ENCODE measurements at regions of chr12 and their contacts with region 1.

Region 1: DNA sequence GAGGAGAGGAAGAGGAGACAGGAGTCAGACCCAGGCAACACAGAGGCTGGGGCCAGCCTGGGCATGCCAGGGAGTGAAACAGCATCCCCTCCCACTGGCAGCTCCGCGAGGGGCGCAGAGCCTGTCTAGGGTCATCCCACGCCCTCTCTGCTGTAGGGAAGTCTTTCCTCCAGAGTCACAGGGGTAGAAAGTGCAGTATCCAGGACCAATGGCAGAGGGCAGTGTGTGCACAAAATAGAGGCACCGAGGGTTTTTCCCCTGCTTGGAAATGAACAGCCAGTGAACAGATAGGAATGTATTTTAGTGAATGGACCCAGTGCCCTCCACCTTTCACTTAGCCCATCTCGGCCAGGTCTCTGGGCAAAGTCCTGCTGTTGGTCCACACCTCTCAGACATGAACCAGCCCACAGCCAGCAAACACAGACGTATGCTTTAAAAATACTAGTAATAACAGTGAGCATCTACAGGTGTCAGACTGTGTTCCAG is 9.4 kb upstream of the KRT74 start:
- DNase-seq: peak; percentile 38 to 81 (median 60)
- ATAC-seq: peak; percentile 32
- H3K4me3 ChIP-seq: no peak overlapping the region
- H3K4me3 Mint-ChIP-seq: no peak overlapping the region
- H3K27ac ChIP-seq: no peak overlapping the region
- H3K27ac Mint-ChIP-seq: peak overlapping the region; percentile 57
- H3K4me1 ChIP-seq: peaks cover 49% of the 10 kb centered on the region
- H3K4me1 Mint-ChIP-seq: peaks cover 64% of the 10 kb centered on the region
- H3K27me3 ChIP-seq: no peaks in the 10 kb centered on the region
- H3K27me3 Mint-ChIP-seq: no peaks in the 10 kb centered on the region
- CTCF ChIP-seq: peak; percentile 70

Region 2: GRCh38 chr12:52603314-52603713 is 20.3 kb after region 1 on chr12:
- CTCF ChIA-PET with region 1: no interaction called
- POLR2A ChIA-PET with region 1: interaction called, 114 read pairs
- intact Hi-C with region 1: loop called (anchors 2 kb)
- DNase-seq: peak in 7 of 14 experiments; percentile 30 to 67 (median 54)
- ATAC-seq: peak; percentile 85
- H3K4me3 ChIP-seq: no peak overlapping the region
- H3K4me3 Mint-ChIP-seq: peak overlapping the region; percentile 32
- H3K27ac ChIP-seq: no peak overlapping the region
- H3K27ac Mint-ChIP-seq: peak overlapping the region; percentile 89
- H3K4me1 ChIP-seq: peaks cover 58% of the 10 kb centered on the region
- H3K4me1 Mint-ChIP-seq: peaks cover 82% of the 10 kb centered on the region
- H3K27me3 ChIP-seq: peaks cover 0 to 7% of the 10 kb centered on the region in 2 experiments
- H3K27me3 Mint-ChIP-seq: peaks cover 5% of the 10 kb centered on the region
- CTCF ChIP-seq: no peak

Region 3: DNA sequence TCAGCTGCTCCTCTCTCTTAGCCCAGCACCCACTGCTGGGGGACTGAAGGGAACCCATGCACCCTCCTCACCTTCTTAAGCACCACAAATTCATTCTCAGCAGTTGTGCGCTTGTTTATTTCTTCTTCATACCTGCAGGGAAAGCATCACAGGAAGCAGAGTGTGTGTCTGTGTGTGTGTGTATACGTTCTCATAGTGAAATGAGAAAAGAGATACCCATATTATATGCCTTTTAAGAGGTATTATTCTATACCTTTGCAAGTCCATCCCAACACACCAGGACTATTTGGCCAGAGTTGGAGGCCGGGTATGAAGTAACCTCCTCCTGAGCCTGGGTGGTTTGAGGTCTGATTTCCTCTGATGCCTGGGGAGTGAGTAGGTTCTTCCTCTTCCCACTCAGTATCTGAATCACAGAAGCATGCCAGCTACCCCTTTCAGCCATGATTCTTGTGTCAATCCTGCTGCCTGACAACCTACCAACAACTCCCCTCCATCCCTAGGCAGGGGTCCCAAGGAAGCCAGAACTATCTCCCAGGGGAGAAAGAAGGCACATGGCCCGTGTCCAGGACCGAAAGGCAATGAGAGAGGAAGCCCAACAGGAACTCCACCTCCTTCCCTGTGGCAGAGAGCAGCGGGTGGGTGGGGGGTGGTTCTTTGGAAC is 32.3 kb after region 1 on chr12:
- CTCF ChIA-PET with region 1: interaction called, 6 read pairs
- POLR2A ChIA-PET with region 1: interaction called, 114 read pairs
- intact Hi-C with region 1: loop called in 1 of 2 experiments (anchors 1 kb)
- DNase-seq: peak in 3 of 14 experiments; percentile 11 to 42 (median 35)
- ATAC-seq: peak; percentile 32
- H3K4me3 ChIP-seq: no peak overlapping the region
- H3K4me3 Mint-ChIP-seq: peak overlapping the region; percentile 62
- H3K27ac ChIP-seq: peak overlapping the region; percentile 47 to 61
- H3K27ac Mint-ChIP-seq: peak overlapping the region; percentile 89
- H3K4me1 ChIP-seq: peaks cover 89% of the 10 kb centered on the region
- H3K4me1 Mint-ChIP-seq: peaks cover 100% of the 10 kb centered on the region
- H3K27me3 ChIP-seq: no peaks in the 10 kb centered on the region
- H3K27me3 Mint-ChIP-seq: no peaks in the 10 kb centered on the region
- CTCF ChIP-seq: no peak

Region 4: DNA sequence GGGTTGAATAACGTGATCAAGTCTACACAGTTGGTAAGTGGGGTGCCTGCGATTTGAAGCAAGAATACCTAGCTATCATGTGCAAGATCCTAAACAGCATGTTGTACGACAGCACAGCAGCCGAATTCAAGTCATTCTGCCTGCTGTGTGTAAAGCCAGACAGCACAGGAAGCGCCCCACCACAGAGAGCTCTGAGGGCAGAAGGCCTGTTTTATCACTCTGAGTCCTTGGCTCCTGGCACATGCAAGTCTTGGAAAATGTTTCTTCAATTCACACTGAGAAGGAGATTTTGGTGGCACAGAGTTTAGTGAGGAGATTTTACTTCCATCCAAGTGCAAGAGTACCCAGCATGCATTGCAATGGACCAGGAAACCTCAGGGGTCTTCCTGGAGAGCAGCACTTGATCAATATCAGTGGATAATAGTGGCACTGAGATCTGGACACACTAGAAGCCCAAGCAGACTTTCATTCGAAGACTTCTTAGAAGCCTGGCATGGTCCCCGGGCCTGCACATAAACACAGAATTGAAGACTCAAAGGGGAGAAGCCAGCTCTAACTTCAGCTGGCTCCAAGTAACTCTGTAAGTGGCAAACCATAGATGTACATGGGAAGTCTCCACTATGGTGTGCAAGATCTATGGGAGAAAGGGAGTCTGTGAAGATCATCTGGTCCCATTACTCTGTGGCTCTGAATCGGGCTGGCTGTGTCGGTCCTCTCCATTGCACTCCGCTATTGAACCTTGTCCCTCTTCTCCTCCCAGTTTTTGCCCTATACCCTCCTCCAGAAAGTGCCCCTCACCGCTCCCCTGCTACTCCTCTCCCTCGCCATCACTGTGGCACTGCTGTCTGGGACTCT is 98.7 kb after region 1 on chr12:
- CTCF ChIA-PET with region 1: no interaction called
- POLR2A ChIA-PET with region 1: interaction called, 4 read pairs
- intact Hi-C with region 1: loop called in 1 of 2 experiments (anchors 1 kb)
- DNase-seq: peak; percentile 21 to 74 (median 48)
- ATAC-seq: peak; percentile 98
- H3K4me3 ChIP-seq: no peak overlapping the region
- H3K4me3 Mint-ChIP-seq: peak overlapping the region; percentile 52
- H3K27ac ChIP-seq: no peak overlapping the region
- H3K27ac Mint-ChIP-seq: peak overlapping the region; percentile 86
- H3K4me1 ChIP-seq: peaks cover 24% of the 10 kb centered on the region
- H3K4me1 Mint-ChIP-seq: peaks cover 64% of the 10 kb centered on the region
- H3K27me3 ChIP-seq: no peaks in the 10 kb centered on the region
- H3K27me3 Mint-ChIP-seq: no peaks in the 10 kb centered on the region
- CTCF ChIP-seq: no peak

Region 5: DNA sequence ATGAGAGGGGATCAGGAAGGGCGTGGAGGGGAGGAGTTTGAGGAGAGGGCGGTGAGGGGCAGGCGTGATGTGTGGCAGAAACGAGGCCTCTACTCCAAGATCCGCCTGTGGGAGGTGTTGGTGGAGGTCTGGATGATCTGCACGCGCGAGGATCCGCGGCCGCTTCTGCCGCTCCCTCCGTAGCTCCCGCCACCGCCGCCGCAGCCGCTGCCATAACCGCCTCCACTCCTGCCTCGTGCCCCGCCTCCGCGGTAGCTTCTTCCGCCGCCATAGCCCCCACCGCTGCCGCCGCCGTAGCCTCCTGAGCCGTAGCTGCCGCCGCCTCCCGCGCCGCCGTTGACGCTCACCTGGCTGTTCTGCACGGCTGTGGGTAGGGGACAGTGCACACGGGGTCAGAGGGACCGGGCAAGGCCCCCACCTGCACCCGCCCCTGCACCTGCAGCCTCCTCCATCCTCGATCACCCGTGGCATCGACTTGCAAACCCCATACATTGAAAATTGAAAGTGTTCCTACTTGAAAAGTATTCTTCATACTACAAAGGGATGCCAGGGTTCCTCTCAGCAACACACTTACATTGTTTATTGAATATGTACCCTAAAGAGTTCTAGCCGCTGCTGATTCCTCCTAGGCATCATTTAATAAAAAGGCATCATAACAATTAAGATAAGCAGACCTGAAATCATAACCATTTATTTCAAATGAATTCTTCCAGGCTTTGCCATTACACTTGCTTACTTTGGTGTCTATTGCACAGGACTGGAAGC is 108.2 kb after region 1 on chr12:
- CTCF ChIA-PET with region 1: interaction called, 4 read pairs
- POLR2A ChIA-PET with region 1: interaction called, 12 read pairs
- intact Hi-C with region 1: no loop called
- DNase-seq: peak; percentile 43 to 77 (median 64)
- ATAC-seq: peak; percentile 87
- H3K4me3 ChIP-seq: peak overlapping the region; percentile 55
- H3K4me3 Mint-ChIP-seq: peak overlapping the region; percentile 83
- H3K27ac ChIP-seq: no peak overlapping the region
- H3K27ac Mint-ChIP-seq: peak overlapping the region; percentile 87
- H3K4me1 ChIP-seq: peaks cover 32% of the 10 kb centered on the region
- H3K4me1 Mint-ChIP-seq: peaks cover 64% of the 10 kb centered on the region
- H3K27me3 ChIP-seq: no peaks in the 10 kb centered on the region
- H3K27me3 Mint-ChIP-seq: no peaks in the 10 kb centered on the region
- CTCF ChIP-seq: no peak

Region 6: DNA sequence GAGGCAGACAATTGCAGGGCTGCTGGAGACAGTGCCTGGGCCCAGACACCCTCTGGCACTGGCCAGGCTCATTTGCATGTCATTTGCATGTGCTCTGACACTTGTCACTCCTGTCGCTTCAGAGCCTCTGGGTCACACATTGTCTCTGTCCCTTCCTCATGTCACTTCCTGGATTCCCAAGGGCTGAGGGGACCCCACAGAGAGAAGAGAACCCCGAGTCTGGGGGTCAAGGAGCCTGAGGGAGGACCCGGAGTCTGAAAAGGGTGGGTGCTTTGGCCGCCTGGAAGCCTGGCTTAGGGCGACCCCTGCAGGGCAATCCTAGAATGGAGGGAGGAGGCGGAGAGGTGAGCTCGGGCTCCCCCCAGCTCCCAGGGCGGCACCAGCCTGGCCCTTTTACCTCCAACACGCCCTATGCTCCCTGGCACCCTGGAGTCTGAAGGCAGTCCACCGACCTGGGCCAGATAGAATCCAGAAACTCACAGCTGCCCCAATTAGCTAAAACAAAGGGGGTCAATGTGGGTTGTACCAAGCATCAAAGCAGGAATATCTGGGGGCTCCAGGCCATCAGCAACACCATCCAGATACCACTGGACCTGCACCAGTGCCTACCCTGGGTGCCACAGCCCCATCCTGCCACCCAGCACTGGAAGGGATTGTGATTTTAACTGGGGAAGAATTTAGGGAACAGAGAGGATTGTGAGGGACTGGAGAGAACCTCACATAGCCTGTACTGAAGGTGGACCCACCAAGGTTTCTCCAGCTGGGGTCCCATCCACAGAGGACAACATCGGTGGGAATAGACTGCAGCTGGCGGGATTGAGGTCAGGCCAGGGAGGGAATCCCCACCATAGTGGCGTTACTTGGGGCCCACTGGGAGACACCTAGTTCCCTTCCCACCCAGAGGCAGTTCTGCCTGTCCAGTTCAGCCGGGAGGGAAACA is 287.6 kb after region 1 on chr12:
- CTCF ChIA-PET with region 1: interaction called, 13 read pairs
- POLR2A ChIA-PET with region 1: interaction called, 9 read pairs
- intact Hi-C with region 1: loop called (anchors 1 kb)
- DNase-seq: peak; percentile 70 to 85 (median 78)
- ATAC-seq: peak; percentile 69
- H3K4me3 ChIP-seq: no peak overlapping the region
- H3K4me3 Mint-ChIP-seq: no peak overlapping the region
- H3K27ac ChIP-seq: no peak overlapping the region
- H3K27ac Mint-ChIP-seq: peak overlapping the region; percentile 33
- H3K4me1 ChIP-seq: peaks cover 39% of the 10 kb centered on the region
- H3K4me1 Mint-ChIP-seq: peaks cover 50% of the 10 kb centered on the region
- H3K27me3 ChIP-seq: peaks cover 0 to 9% of the 10 kb centered on the region in 2 experiments
- H3K27me3 Mint-ChIP-seq: peaks cover 10% of the 10 kb centered on the region
- CTCF ChIP-seq: peak; percentile 71

Region 7: DNA sequence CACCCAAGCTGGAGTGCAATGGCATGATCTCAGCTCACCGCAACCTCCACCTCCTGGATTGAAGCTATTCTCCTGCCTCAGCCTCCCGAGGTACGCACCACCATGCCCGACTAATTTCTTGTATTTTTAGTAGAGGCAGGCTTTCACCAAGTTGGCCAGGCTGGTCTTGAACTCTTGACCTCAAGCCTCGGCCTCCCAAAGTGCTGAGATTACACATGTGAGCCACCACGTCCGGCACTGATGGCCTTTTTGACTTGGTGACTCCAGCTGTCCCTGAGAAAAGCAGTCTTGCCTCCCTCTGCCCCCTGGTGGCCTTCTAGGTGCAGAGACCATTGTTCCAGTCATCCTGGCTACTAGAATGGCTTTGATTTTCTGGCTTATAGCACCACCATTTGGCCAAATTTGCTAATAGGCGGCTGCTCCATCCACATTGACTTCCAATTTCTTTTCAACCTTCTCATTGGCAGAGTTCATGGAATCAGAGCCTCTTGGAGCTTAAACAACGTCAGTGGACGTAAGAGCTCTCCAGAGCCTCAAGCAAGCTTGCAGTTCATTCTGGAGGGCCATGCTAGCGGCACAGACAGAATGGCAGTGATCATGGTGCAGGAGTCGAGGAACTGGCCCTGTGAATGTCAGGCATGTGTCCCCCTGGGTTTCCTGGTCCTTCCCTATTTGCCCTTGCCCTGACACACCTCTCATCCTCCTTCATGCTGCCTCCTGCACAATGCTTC is 397.8 kb after region 1 on chr12:
- CTCF ChIA-PET with region 1: interaction called, 4 read pairs
- POLR2A ChIA-PET with region 1: no interaction called
- intact Hi-C with region 1: loop called (anchors 1 to 2 kb)
- DNase-seq: peak; percentile 64 to 91 (median 76)
- ATAC-seq: peak; percentile 97
- H3K4me3 ChIP-seq: no peak overlapping the region
- H3K4me3 Mint-ChIP-seq: no peak overlapping the region
- H3K27ac ChIP-seq: no peak overlapping the region
- H3K27ac Mint-ChIP-seq: no peak overlapping the region
- H3K4me1 ChIP-seq: peaks cover 3% of the 10 kb centered on the region
- H3K4me1 Mint-ChIP-seq: no peaks in the 10 kb centered on the region
- H3K27me3 ChIP-seq: peaks cover 0 to 4% of the 10 kb centered on the region in 2 experiments
- H3K27me3 Mint-ChIP-seq: peaks cover 54% of the 10 kb centered on the region
- CTCF ChIP-seq: peak; percentile 99